ENCODE measurements at regions of chr20 and their contacts with region 1.

Region 1: GRCh38 chr20:35463455-35464300 is 8.3 kb downstream of the CEP250 start:
- DNase-seq: peak; percentile 67
- ATAC-seq: peak; percentile 90
- H3K4me3 Mint-ChIP-seq: no peak overlapping the region
- H3K27ac Mint-ChIP-seq: no peak overlapping the region
- H3K4me1 Mint-ChIP-seq: no peaks in the 10 kb centered on the region
- H3K27me3 Mint-ChIP-seq: no peaks in the 10 kb centered on the region

Region 2: GRCh38 chr20:35447082-35447789 is 16.4 kb before region 1 on chr20:
- CTCF ChIA-PET with region 1: interaction called, 37 read pairs
- POLR2A ChIA-PET with region 1: no interaction called
- intact Hi-C with region 1: no loop called
- DNase-seq: peak; percentile 95
- ATAC-seq: peak; percentile 99
- H3K4me3 Mint-ChIP-seq: peak overlapping the region; percentile 78
- H3K27ac Mint-ChIP-seq: peak overlapping the region; percentile 58
- H3K4me1 Mint-ChIP-seq: peaks cover 7% of the 10 kb centered on the region
- H3K27me3 Mint-ChIP-seq: no peaks in the 10 kb centered on the region

Region 3: DNA sequence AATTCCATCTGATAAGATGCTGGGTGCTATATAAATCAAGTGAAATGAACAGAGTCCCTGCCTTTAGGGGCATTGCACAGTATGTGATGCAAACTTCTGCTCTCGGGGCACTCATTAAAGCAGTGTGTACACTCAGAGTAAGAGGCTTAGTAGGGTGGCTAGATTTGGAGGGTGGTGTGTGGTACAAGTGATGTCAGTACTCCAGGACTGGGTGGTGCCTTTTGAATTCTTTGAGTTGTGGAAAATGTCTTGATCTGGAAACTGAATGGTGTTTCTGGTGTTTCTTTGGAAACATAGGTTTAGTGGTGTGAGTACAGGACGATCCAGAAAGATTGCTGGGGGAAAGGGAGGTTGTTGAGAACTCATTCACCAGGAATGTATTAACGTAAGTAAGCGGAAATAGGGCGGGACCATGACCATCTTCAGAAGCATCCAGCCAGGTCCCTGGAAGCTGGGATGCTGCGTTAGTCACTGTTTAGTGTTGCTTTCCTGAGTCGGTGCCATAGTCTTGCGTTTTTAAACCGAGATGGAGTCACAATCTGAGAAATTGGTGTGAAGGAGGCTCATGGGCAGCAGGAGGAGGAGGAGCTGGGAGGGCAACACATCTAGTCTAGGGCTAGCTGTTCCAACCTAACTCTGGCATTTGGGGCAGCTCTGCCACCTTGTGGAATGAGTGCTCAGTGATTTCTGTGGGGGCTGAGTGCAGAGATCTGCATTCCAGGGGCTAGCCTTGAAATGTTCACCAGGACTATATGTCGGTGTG is 420.3 kb after region 1 on chr20:
- CTCF ChIA-PET with region 1: interaction called, 8 read pairs
- POLR2A ChIA-PET with region 1: no interaction called
- intact Hi-C with region 1: loop called (anchors 5 to 10 kb)
- DNase-seq: peak; percentile 76
- ATAC-seq: peak; percentile 93
- H3K4me3 Mint-ChIP-seq: no peak overlapping the region
- H3K27ac Mint-ChIP-seq: peak overlapping the region; percentile 66
- H3K4me1 Mint-ChIP-seq: peaks cover 12% of the 10 kb centered on the region
- H3K27me3 Mint-ChIP-seq: no peaks in the 10 kb centered on the region

Measured in activated CD4-positive, alpha-beta T cell treated with anti-CD3 and anti-CD28 coated beads for 36 hours (primary cell).